Activated CD4-positive, alpha-beta memory T cell treated with anti-CD3 and anti-CD28 coated beads for 36 hours (primary cell): ENCODE measurements at regions of chr15 and their contacts with region 1.

Region 1: GRCh38 chr15:99250494-99251435 is 516 bp upstream of the LRRC28 start:
- DNase-seq: peak; percentile 99
- H3K4me3 Mint-ChIP-seq: peak overlapping the region; percentile 88
- H3K27ac Mint-ChIP-seq: peak overlapping the region; percentile 84
- H3K4me1 Mint-ChIP-seq: peaks cover 28% of the 10 kb centered on the region
- H3K27me3 Mint-ChIP-seq: no peaks in the 10 kb centered on the region

Region 2: GRCh38 chr15:99104788-99105513 is 145.8 kb before region 1 on chr15 and contains the start of gene SYNM:
- CTCF ChIA-PET with region 1: interaction called, 6 read pairs
- POLR2A ChIA-PET with region 1: no interaction called
- intact Hi-C with region 1: loop called (anchors 5 kb)
- DNase-seq: peak; percentile 60
- H3K4me3 Mint-ChIP-seq: peak within 1 kb of the TSS; percentile 62
- H3K27ac Mint-ChIP-seq: no peak within 1 kb of the TSS
- H3K4me1 Mint-ChIP-seq: peaks cover 10% of the 10 kb centered on the region
- H3K27me3 Mint-ChIP-seq: peaks cover 35% of the 10 kb centered on the region
- total RNA-seq, gene SYNM: 2.6 to 2.7 TPM

Region 3: DNA sequence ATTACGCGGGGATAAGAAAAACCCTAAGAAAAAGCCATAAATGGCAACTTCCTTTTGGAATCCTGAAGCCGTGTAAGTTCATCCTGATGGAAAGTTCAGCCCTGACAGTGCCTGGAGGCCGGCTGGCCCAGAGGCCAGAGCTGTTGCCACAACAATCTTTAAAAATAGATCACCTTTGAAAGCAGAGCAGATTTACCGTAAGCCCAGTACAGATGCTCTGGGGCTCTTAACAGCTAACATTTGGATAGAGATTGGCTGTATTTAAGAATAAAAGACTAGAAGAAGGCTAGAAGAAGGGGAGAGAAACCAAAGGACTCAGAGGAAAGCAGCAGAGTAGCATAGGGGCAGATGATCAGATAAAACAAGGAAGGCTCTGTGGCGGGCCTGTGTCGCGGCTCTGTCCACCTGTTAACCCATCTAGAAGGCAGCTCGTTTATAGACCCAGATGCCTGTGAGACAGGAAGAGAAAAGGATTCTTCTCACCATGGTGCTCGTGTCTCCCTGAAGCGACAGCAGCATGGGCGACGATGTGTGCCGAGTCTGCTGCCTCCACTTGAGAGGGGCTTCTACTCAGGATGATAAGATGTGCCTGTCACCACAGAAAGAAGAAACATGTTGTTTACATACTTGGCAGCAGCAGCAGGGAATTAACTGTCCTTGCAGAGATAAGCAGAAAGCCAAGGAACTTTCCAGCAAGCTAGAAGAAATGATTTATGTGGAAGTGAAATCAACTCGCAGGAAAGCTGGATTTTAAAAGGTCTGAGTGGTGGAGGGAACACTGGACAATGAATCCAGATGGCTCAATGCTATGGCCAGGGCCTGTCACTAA is 76.0 kb before region 1 on chr15:
- CTCF ChIA-PET with region 1: no interaction called
- POLR2A ChIA-PET with region 1: no interaction called
- intact Hi-C with region 1: no loop called
- DNase-seq: no peak
- H3K4me3 Mint-ChIP-seq: no peak overlapping the region
- H3K27ac Mint-ChIP-seq: no peak overlapping the region
- H3K4me1 Mint-ChIP-seq: no peaks in the 10 kb centered on the region
- H3K27me3 Mint-ChIP-seq: no peaks in the 10 kb centered on the region

Region 4: DNA sequence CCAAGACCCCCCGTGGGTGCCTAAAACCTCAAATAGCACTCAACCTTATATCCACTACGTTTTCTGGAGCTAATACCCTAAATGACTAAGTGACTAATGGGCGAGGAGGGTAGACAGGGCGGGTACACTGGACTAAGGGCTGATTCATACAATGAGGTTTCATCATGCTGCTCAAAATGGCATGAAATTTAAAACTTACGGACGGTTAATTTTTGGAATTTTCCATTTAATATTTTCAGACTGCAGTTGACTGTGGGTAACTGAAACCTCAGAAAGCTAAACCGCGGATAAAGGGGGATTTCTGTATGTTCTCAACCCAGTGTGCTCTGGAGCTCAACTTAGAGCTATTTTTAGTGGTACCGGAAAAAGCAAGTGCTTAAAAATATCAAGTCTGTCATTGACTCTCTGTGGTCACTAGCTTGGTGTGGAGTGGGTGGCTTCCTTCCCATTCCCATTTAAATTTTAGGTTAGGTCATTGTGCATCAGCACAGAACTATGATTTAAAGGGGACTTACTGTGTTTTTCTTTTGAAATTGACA is 73.4 kb after region 1 on chr15:
- CTCF ChIA-PET with region 1: no interaction called
- POLR2A ChIA-PET with region 1: no interaction called
- intact Hi-C with region 1: loop called (anchors 1 kb)
- DNase-seq: peak; percentile 44
- H3K4me3 Mint-ChIP-seq: no peak overlapping the region
- H3K27ac Mint-ChIP-seq: no peak overlapping the region
- H3K4me1 Mint-ChIP-seq: peaks cover 8% of the 10 kb centered on the region
- H3K27me3 Mint-ChIP-seq: no peaks in the 10 kb centered on the region

Region 5: GRCh38 chr15:99826157-99826780 is 575.5 kb after region 1 on chr15:
- CTCF ChIA-PET with region 1: no interaction called
- POLR2A ChIA-PET with region 1: no interaction called
- intact Hi-C with region 1: loop called (anchors 5 kb)
- DNase-seq: peak; percentile 43
- H3K4me3 Mint-ChIP-seq: peak overlapping the region; percentile 41
- H3K27ac Mint-ChIP-seq: peak overlapping the region; percentile 95
- H3K4me1 Mint-ChIP-seq: peaks cover 52% of the 10 kb centered on the region
- H3K27me3 Mint-ChIP-seq: no peaks in the 10 kb centered on the region

Region 6: DNA sequence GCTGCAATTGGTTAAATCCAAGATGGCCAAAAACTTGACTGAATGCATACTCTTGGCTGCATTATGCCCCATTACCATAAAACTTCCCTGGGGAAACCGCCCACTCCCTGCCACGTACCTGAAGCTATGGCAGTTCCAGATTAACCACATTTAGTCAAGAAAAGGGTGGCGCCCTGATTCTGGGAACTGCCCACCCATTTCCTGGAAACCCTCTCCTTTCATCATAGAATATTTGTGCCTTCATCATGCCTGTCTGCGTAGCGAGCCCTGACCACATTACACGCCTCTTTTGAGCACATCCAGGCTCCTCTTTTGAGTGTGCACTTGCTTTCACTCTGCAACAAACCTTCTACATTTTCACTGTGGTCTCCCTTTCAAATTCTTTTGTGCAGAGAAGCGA is 1346.0 kb after region 1 on chr15:
- CTCF ChIA-PET with region 1: no interaction called
- POLR2A ChIA-PET with region 1: no interaction called
- intact Hi-C with region 1: loop called (anchors 5 kb)
- DNase-seq: peak; percentile 98
- H3K4me3 Mint-ChIP-seq: peak overlapping the region; percentile 76
- H3K27ac Mint-ChIP-seq: no peak overlapping the region
- H3K4me1 Mint-ChIP-seq: peaks cover 74% of the 10 kb centered on the region
- H3K27me3 Mint-ChIP-seq: no peaks in the 10 kb centered on the region